CD8-positive, alpha-beta T cell (primary cell): ENCODE measurements at regions of chr22 and their contacts with region 1.

Region 1: DNA sequence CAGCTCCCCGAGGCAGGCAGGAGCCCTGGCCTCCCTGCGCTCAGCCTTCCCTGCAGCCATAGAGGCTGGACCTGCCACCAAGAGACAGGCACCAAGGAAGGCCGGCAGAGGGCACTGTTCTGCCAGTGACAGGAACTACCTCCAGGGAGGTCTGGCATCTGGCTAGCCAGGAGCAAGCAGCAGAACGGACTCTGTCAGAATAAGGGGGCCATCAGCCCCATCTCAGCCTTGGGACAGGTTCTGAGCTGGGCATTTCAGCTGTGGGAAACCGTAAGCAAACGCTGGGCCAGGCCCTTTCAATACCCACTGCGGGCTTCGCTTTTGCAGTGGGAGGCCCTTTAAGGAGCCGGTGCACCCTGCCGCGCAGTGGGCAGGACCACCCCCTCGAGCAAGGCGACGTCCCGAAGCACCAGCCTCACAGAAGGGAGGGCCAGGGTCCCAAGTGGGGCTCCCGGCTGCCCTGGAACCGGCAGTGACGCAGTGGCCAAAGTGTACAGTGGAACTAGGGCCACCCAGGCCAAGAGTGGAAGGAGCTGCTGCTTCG is 18.2 kb downstream of the IFT27 start:
- DNase-seq: peak; percentile 49 to 82 (median 73)
- ATAC-seq: peak; percentile 67
- H3K4me3 ChIP-seq: no peak overlapping the region
- H3K4me3 Mint-ChIP-seq: no peak overlapping the region
- H3K27ac ChIP-seq: no peak overlapping the region
- H3K27ac Mint-ChIP-seq: no peak overlapping the region
- H3K4me1 ChIP-seq: peaks cover 4% of the 10 kb centered on the region
- H3K4me1 Mint-ChIP-seq: no peaks in the 10 kb centered on the region
- H3K27me3 ChIP-seq: no peaks in the 10 kb centered on the region
- H3K27me3 Mint-ChIP-seq: peaks cover 13% of the 10 kb centered on the region
- CTCF ChIP-seq: peak; percentile 78

Region 2: GRCh38 chr22:36741204-36741793 is 16.4 kb before region 1 on chr22:
- CTCF ChIA-PET with region 1: interaction called, 51 read pairs
- POLR2A ChIA-PET with region 1: no interaction called
- intact Hi-C with region 1: no loop called
- DNase-seq: peak in 1 of 9 experiments; percentile 13
- ATAC-seq: no peak
- H3K4me3 ChIP-seq: no peak overlapping the region
- H3K4me3 Mint-ChIP-seq: no peak overlapping the region
- H3K27ac ChIP-seq: no peak overlapping the region
- H3K27ac Mint-ChIP-seq: no peak overlapping the region
- H3K4me1 ChIP-seq: no peaks in the 10 kb centered on the region
- H3K4me1 Mint-ChIP-seq: no peaks in the 10 kb centered on the region
- H3K27me3 ChIP-seq: peaks cover 0 to 2% of the 10 kb centered on the region in 2 experiments
- H3K27me3 Mint-ChIP-seq: peaks cover 23% of the 10 kb centered on the region
- CTCF ChIP-seq: no peak

Region 3: DNA sequence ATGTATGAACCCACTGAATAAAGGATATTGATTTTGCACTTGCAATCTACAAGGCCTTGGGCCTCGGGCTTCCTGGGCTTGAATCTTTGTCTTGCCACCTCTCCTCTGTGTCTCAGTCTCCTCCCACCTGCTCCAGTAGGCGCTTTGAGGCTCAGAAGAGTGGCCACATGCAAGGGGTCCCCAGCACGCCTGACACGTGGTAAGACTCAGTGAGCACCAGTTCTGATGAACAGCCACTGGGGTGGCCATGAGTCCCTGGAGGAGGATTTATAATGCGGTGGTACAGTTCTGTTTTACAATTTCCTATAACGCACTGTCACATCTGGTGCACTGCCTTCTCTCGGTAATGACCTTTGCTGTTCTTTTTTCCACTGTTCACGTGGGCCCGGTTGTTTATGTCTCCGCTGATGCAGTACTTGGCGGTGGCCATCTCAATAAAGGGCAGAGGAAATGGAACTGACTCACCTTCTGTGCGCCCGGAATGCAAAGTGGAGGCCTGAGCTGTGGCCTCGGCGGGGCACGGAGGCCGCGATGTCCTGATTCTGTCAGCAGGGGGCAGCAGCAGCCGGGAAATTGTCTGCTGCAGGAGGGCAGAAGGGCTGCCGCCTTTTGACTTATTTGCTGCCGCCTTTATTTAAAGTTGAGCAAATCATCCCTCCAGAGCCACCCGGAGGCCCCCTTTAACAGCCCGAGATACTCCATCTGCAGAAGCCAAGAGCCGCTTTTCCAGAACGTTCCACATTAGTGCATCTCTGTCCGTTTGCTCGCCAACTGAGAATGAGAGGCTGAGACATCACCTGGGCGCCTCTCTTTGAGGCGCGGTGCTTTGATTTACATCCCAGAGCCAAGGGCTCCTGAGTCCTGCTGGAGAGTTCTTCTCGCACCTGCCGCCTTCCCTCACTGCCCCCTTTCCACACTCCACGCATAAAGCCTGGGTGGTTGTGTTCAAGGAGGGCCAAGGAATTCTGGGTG is 24.2 kb after region 1 on chr22:
- CTCF ChIA-PET with region 1: interaction called, 46 read pairs
- POLR2A ChIA-PET with region 1: interaction called, 6 read pairs
- intact Hi-C with region 1: no loop called
- DNase-seq: peak; percentile 71 to 93 (median 85)
- ATAC-seq: peak; percentile 96
- H3K4me3 ChIP-seq: no peak overlapping the region
- H3K4me3 Mint-ChIP-seq: no peak overlapping the region
- H3K27ac ChIP-seq: no peak overlapping the region
- H3K27ac Mint-ChIP-seq: peak overlapping the region; percentile 41
- H3K4me1 ChIP-seq: peaks cover 11% of the 10 kb centered on the region
- H3K4me1 Mint-ChIP-seq: peaks cover 16% of the 10 kb centered on the region
- H3K27me3 ChIP-seq: peaks cover 0 to 2% of the 10 kb centered on the region in 2 experiments
- H3K27me3 Mint-ChIP-seq: peaks cover 2% of the 10 kb centered on the region
- CTCF ChIP-seq: peak; percentile 95

Region 4: DNA sequence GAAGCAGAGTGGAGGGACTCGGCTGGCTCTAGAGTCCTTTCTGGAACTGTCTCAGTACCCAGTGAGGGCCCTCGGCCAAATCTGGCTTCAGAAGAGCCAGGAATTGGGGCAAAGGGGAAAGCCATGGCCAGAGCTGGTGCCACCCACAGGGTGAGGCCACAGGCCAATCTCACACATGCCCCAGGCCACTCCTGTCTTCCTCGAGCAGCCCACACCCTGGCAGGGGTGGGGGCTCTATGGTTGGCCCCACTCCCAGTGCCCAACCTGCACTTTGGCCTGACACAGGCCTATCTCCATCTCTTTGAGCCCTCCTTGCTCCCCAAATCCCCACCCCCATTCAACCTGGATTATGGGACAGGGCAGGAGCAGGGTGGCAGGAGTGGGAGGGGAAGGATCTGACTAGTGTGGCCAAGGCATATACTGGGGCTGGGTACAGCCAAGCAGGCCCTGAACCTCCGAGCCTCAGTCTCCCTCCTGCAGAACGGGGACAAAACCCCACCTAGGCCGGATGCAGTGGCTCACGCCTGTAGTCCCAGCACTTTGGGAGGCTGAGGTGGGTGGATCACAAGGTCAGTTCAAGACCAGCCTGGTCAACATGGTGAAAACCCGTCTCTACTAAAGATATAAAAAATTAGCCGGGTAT is 254.6 kb after region 1 on chr22:
- CTCF ChIA-PET with region 1: no interaction called
- POLR2A ChIA-PET with region 1: no interaction called
- intact Hi-C with region 1: no loop called
- DNase-seq: no peak
- ATAC-seq: no peak
- H3K4me3 ChIP-seq: no peak overlapping the region
- H3K4me3 Mint-ChIP-seq: no peak overlapping the region
- H3K27ac ChIP-seq: no peak overlapping the region
- H3K27ac Mint-ChIP-seq: no peak overlapping the region
- H3K4me1 ChIP-seq: no peaks in the 10 kb centered on the region
- H3K4me1 Mint-ChIP-seq: no peaks in the 10 kb centered on the region
- H3K27me3 ChIP-seq: no peaks in the 10 kb centered on the region
- H3K27me3 Mint-ChIP-seq: no peaks in the 10 kb centered on the region
- CTCF ChIP-seq: no peak